SK-N-SH (cell line): ENCODE measurements at regions of chr7 and their contacts with region 1.

Region 1: DNA sequence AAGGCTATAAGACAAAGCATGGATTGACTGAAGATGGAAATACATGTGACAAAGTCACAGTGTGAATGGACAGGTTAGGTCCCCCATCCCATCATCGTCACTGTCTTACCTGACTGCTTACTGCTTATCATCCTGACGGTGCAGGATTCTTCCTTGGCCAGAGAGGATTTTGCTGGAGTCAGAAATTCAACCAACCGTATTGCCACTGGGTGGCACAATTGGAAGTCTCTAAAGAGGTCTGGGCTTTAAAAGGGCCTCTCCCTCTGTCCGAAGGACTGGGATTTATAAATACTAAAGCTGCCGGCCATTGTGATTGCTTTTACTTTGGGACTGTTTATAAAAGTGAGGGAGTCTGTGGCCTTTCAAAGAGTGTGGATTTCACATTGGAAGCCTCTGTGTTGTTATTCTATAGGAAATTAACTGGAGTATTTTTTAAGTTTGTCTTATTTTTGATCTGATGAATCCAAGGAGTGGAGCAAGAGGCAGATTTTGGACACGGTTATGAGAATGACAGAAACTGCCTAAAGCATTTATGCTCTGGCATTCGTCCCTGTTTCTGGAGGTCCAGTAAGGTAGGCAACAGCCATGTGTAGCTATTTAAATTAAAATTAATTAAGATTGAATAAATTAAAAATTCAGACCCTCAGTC is 113.3 kb upstream of the CREB5 start:
- DNase-seq: peak; percentile 77
- H3K4me3 ChIP-seq: no peak overlapping the region
- H3K27ac ChIP-seq: no peak overlapping the region
- H3K4me1 ChIP-seq: no peaks in the 10 kb centered on the region; a peak in 2 of 4 replicates
- H3K27me3 ChIP-seq: no peaks in the 10 kb centered on the region; the same call in 1 of the 2 replicates
- CTCF ChIP-seq: peak; percentile 79
- EP300 ChIP-seq: no peak
- RAD21 ChIP-seq: peak; percentile 99

Region 2: DNA sequence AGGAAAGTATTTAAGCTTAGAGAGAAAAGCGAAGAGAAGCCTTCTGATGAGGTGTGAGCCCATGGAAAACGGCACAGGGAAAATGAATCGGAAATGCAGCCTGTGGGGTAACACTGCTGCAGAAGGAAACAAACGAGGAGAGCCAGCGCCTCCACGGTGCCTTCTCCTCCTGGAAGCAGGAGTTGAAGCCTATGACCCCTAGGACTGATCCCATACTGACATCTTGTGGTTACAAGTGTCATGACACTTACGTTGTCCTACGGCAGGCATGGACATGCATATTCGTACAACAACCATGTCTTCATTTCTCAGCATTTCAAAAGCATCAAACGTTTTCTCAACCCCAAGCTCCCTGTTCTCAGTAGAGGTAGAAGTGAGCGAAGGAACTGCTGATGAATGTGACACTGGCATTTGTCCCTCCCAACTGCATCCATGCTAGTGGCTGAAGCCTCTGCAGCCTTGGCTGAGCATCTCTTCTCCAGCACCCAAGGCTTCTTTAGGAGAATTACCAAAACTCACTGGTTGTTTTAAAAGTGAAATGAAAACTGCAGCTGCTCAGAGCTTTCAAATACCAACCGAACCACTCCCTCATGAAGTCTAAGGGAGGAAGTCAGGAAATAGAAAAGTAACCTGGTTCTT is 278.6 kb before region 1 on chr7:
- CTCF ChIA-PET with region 1: no interaction called
- POLR2A ChIA-PET with region 1: no interaction called
- DNase-seq: peak; percentile 84
- H3K4me3 ChIP-seq: no peak overlapping the region; a peak in 1 of 4 replicates
- H3K27ac ChIP-seq: no peak overlapping the region
- H3K4me1 ChIP-seq: peaks cover 7 to 14% of the 10 kb centered on the region in 2 experiments; a peak in 2 of 4 replicates
- H3K27me3 ChIP-seq: no peaks in the 10 kb centered on the region
- CTCF ChIP-seq: peak; percentile 97
- EP300 ChIP-seq: no peak
- RAD21 ChIP-seq: peak; percentile 99

Region 3: DNA sequence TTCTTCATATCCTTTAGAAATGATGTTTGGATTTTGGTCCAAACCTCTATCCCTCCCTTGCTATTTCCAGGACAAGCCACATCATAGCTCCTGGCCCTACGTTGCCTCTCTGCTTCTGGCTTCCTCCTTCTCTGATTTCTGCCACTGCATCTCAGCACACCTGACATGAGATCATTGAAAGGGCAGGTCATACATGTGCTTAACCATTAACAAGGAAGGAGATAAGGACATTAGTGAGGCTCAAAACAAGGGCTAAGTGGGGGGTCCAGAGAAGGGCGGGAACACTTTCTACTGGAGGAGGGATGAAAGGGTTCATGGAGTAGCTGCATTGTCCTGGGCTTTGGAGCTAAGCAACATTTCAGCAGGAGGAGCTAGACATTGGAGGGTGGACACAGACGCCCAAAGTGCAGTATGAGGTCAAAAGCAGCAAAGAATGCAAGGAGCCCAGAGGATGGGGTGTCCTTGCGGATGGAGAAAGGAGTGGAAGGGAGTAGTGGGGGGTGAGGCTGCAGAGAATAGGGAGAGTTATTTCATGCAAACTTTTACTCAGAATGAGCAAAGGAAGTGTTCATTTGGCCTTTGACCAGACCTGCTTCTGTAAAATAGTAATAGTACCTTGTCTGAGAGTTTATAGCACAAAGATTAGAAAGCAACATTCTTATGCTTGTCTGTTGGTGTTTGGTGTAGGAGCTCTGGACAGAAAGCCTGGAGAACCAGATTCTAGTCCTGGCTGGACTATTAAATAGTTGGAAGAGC is 10.9 kb after region 1 on chr7:
- CTCF ChIA-PET with region 1: interaction called, 41 read pairs
- POLR2A ChIA-PET with region 1: no interaction called
- DNase-seq: no peak
- H3K4me3 ChIP-seq: no peak overlapping the region
- H3K27ac ChIP-seq: no peak overlapping the region
- H3K4me1 ChIP-seq: peaks cover 0 to 7% of the 10 kb centered on the region in 2 experiments; a peak in 2 of 4 replicates
- H3K27me3 ChIP-seq: peaks cover 26% of the 10 kb centered on the region; the same call in 1 of the 2 replicates
- CTCF ChIP-seq: no peak
- EP300 ChIP-seq: no peak
- RAD21 ChIP-seq: no peak

Region 4: GRCh38 chr7:28329661-28330363 is 30.8 kb after region 1 on chr7:
- CTCF ChIA-PET with region 1: interaction called, 14 read pairs
- POLR2A ChIA-PET with region 1: no interaction called
- DNase-seq: no peak
- H3K4me3 ChIP-seq: no peak overlapping the region
- H3K27ac ChIP-seq: no peak overlapping the region
- H3K4me1 ChIP-seq: peaks cover 0 to 3% of the 10 kb centered on the region in 2 experiments; a peak in 1 of 4 replicates
- H3K27me3 ChIP-seq: no peaks in the 10 kb centered on the region
- CTCF ChIP-seq: no peak
- EP300 ChIP-seq: no peak
- RAD21 ChIP-seq: no peak

Region 5: GRCh38 chr7:28383975-28384374 is 85.0 kb after region 1 on chr7:
- CTCF ChIA-PET with region 1: interaction called, 13 read pairs
- POLR2A ChIA-PET with region 1: no interaction called
- DNase-seq: no peak
- H3K4me3 ChIP-seq: no peak overlapping the region
- H3K27ac ChIP-seq: no peak overlapping the region
- H3K4me1 ChIP-seq: no peaks in the 10 kb centered on the region; a peak in 1 of 4 replicates
- H3K27me3 ChIP-seq: peaks cover 18% of the 10 kb centered on the region; the same call in 1 of the 2 replicates
- CTCF ChIP-seq: no peak
- EP300 ChIP-seq: no peak
- RAD21 ChIP-seq: peak; percentile 41

Region 6: GRCh38 chr7:28626624-28627262 is 327.7 kb after region 1 on chr7:
- CTCF ChIA-PET with region 1: interaction called, 68 read pairs
- POLR2A ChIA-PET with region 1: no interaction called
- DNase-seq: peak; percentile 60
- H3K4me3 ChIP-seq: no peak overlapping the region
- H3K27ac ChIP-seq: no peak overlapping the region
- H3K4me1 ChIP-seq: peaks cover 3 to 8% of the 10 kb centered on the region in 2 experiments; a peak in 2 of 4 replicates
- H3K27me3 ChIP-seq: no peaks in the 10 kb centered on the region
- CTCF ChIP-seq: peak; percentile 86
- EP300 ChIP-seq: no peak
- RAD21 ChIP-seq: peak; percentile 76